Endothelial cell of umbilical vein (primary cell): ENCODE measurements at regions of chr19 and their contacts with region 1.

Region 1: DNA sequence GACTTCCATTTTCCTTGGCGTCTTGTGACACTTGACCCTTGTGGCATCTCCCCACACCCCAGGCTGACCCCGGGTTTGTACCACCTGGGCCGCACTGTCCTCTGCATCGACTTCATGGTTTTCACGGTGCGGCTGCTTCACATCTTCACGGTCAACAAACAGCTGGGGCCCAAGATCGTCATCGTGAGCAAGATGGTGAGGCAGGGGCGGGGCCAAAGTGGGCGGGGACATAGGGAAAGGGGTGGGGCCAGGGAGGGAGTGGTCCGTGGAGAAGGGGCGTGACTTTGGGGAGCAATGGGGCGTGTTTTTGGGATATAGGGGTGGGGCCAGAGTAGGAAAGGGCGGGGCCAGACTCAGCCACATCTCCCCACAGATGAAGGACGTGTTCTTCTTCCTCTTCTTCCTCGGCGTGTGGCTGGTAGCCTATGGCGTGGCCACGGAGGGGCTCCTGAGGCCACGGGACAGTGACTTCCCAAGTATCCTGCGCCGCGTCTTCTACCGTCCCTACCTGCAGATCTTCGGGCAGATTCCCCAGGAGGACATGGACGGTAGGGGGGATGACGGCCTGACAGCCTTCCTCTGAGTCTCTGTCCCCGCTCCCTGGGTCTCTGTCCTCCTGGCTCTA is 42.8 kb downstream of the TRPM4 start:
- DNase-seq: no peak
- H3K4me3 ChIP-seq: no peak overlapping the region
- H3K27ac ChIP-seq: no peak overlapping the region
- H3K4me1 ChIP-seq: peaks cover 9% of the 10 kb centered on the region
- H3K27me3 ChIP-seq: no peaks in the 10 kb centered on the region
- CTCF ChIP-seq: no peak
- POLR2A ChIP-seq: no peak

Region 2: DNA sequence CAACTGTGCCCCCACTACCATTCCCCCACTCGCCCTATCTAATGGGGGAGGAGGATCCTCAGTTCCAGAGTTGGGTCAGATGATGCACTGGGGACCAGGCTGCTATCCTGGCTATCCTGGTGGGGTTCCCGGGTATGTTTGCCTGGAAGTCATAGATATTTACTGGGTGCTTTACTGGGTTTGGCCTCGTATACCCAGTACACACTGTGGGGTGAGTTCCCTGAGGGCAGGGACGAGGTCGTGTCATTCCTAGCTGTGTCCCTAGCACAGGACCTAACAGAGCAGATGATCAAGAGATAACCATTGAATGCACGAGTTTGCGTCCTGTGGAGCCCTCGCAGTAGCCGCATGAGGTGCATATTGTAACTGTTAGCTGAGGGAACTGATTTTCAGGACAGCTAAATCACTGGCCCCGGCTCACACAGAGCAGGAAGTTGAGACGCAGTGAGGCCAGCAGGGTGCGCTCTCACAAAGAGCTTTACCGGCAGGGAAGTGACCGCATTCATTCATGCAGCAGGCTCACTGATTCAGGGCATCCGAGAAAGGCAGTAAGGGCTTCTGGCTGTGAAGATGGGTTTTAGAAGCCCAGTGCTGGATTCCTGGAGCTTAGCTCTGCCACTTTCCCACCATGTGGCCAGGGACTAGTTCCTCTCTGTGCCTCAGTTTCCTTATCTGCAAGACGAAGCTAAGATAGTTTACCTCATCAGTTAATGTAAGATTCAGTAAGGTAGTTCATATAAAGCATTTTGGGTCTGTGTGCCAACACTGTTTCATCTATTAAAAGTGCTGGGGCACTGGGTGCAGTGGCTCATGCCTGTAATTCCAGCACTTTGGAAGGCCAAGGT is 200.6 kb before region 1 on chr19:
- CTCF ChIA-PET with region 1: interaction called, 26 read pairs
- POLR2A ChIA-PET with region 1: no interaction called
- dilution Hi-C with region 1: no loop called
- intact Hi-C with region 1: no loop called
- DNase-seq: peak; percentile 64
- H3K4me3 ChIP-seq: no peak overlapping the region
- H3K27ac ChIP-seq: no peak overlapping the region
- H3K4me1 ChIP-seq: peaks cover under 1% of the 10 kb centered on the region
- H3K27me3 ChIP-seq: no peaks in the 10 kb centered on the region
- CTCF ChIP-seq: peak; percentile 75 to 85
- POLR2A ChIP-seq: no peak

Region 3: GRCh38 chr19:49106648-49107135 is 93.7 kb before region 1 on chr19:
- CTCF ChIA-PET with region 1: interaction called, 35 read pairs
- POLR2A ChIA-PET with region 1: no interaction called
- dilution Hi-C with region 1: no loop called
- intact Hi-C with region 1: no loop called
- DNase-seq: peak; percentile 45
- H3K4me3 ChIP-seq: no peak overlapping the region
- H3K27ac ChIP-seq: no peak overlapping the region
- H3K4me1 ChIP-seq: no peaks in the 10 kb centered on the region
- H3K27me3 ChIP-seq: no peaks in the 10 kb centered on the region
- CTCF ChIP-seq: peak; percentile 82 to 84
- POLR2A ChIP-seq: no peak

Region 4: GRCh38 chr19:49133621-49134454 is 66.5 kb before region 1 on chr19:
- CTCF ChIA-PET with region 1: interaction called, 35 read pairs
- POLR2A ChIA-PET with region 1: interaction called, 3 read pairs
- dilution Hi-C with region 1: no loop called
- intact Hi-C with region 1: no loop called
- DNase-seq: peak; percentile 54
- H3K4me3 ChIP-seq: peak overlapping the region in 1 of 3 experiments; percentile 30
- H3K27ac ChIP-seq: no peak overlapping the region
- H3K4me1 ChIP-seq: no peaks in the 10 kb centered on the region
- H3K27me3 ChIP-seq: peaks cover 0 to 7% of the 10 kb centered on the region in 2 experiments
- CTCF ChIP-seq: peak in 1 of 2 donors; percentile 6
- POLR2A ChIP-seq: no peak

Region 5: GRCh38 chr19:49157445-49158224 is 42.7 kb before region 1 on chr19 and contains the start of gene TRPM4:
- CTCF ChIA-PET with region 1: interaction called, 33 read pairs
- POLR2A ChIA-PET with region 1: no interaction called
- dilution Hi-C with region 1: no loop called
- intact Hi-C with region 1: no loop called
- DNase-seq: peak; percentile 73
- H3K4me3 ChIP-seq: peak within 1 kb of the TSS; percentile 79 to 89 (median 88)
- H3K27ac ChIP-seq: peak within 1 kb of the TSS; percentile 8
- H3K4me1 ChIP-seq: peaks cover 8% of the 10 kb centered on the region
- H3K27me3 ChIP-seq: peaks cover 0 to 2% of the 10 kb centered on the region in 2 experiments
- CTCF ChIP-seq: no peak
- POLR2A ChIP-seq: peak; percentile 77
- total RNA-seq, gene TRPM4: 38.9 and 40.6 TPM in 2 replicates

Region 6: DNA sequence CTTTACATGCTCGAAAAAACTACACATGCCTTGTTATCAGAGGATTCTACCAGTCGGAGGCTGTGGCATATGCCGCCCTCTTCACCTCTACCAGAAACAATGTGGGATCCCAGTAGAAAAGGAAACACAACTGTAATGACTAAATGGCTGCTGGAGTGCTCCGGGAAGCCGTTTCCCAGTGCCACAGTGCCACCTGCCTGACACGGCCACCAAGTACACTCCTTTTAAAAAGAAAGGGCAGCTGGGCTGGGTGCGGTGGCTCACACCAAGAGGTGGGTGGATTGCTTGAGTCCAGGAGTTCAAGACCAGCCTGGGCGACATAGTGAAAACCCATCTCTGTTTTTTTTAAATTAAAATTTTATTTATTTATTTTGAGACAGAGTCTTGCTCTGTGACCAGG is 24.5 kb after region 1 on chr19:
- CTCF ChIA-PET with region 1: interaction called, 10 read pairs
- POLR2A ChIA-PET with region 1: no interaction called
- dilution Hi-C with region 1: no loop called
- intact Hi-C with region 1: no loop called
- DNase-seq: peak; percentile 80
- H3K4me3 ChIP-seq: no peak overlapping the region
- H3K27ac ChIP-seq: no peak overlapping the region
- H3K4me1 ChIP-seq: no peaks in the 10 kb centered on the region
- H3K27me3 ChIP-seq: no peaks in the 10 kb centered on the region
- CTCF ChIP-seq: peak; percentile 51 to 66
- POLR2A ChIP-seq: no peak

Region 7: GRCh38 chr19:49347846-49348245 is 147.5 kb after region 1 on chr19:
- CTCF ChIA-PET with region 1: no interaction called
- POLR2A ChIA-PET with region 1: no interaction called
- dilution Hi-C with region 1: no loop called
- intact Hi-C with region 1: no loop called
- DNase-seq: peak; percentile 43
- H3K4me3 ChIP-seq: no peak overlapping the region
- H3K27ac ChIP-seq: no peak overlapping the region
- H3K4me1 ChIP-seq: no peaks in the 10 kb centered on the region
- H3K27me3 ChIP-seq: no peaks in the 10 kb centered on the region
- CTCF ChIP-seq: no peak
- POLR2A ChIP-seq: no peak

Region 8: DNA sequence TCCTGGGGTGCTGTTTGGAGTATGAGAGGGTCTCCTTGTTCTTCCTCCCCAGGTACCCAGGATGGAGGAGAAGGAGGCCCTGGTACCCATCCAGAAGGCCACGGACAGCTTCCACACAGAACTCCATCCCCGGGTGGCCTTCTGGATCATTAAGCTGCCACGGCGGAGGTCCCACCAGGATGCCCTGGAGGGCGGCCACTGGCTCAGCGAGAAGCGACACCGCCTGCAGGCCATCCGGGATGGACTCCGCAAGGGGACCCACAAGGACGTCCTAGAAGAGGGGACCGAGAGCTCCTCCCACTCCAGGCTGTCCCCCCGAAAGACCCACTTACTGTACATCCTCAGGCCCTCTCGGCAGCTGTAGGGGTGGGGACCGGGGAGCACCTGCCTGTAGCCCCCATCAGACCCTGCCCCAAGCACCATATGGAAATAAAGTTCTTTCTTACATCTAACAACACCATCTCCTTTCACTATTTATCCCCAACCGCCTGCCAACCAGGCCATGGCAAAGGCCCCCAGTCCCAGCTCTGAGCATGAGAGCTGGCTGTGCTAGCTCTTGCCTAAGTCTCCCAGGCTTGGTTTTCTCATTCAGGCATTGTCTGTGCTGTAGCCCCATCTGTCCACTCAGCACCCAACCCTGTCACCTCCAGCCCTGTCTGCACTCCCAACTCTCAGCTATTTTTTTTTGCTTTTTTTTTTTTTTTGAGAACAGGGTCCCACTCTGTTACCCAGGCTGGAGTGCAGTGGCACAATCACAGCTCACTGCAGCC is 174.5 kb after region 1 on chr19:
- CTCF ChIA-PET with region 1: no interaction called
- POLR2A ChIA-PET with region 1: no interaction called
- dilution Hi-C with region 1: no loop called
- intact Hi-C with region 1: no loop called
- DNase-seq: no peak
- H3K4me3 ChIP-seq: no peak overlapping the region
- H3K27ac ChIP-seq: no peak overlapping the region
- H3K4me1 ChIP-seq: no peaks in the 10 kb centered on the region
- H3K27me3 ChIP-seq: peaks cover 1 to 3% of the 10 kb centered on the region in 2 experiments
- CTCF ChIP-seq: no peak
- POLR2A ChIP-seq: no peak

Region 9: DNA sequence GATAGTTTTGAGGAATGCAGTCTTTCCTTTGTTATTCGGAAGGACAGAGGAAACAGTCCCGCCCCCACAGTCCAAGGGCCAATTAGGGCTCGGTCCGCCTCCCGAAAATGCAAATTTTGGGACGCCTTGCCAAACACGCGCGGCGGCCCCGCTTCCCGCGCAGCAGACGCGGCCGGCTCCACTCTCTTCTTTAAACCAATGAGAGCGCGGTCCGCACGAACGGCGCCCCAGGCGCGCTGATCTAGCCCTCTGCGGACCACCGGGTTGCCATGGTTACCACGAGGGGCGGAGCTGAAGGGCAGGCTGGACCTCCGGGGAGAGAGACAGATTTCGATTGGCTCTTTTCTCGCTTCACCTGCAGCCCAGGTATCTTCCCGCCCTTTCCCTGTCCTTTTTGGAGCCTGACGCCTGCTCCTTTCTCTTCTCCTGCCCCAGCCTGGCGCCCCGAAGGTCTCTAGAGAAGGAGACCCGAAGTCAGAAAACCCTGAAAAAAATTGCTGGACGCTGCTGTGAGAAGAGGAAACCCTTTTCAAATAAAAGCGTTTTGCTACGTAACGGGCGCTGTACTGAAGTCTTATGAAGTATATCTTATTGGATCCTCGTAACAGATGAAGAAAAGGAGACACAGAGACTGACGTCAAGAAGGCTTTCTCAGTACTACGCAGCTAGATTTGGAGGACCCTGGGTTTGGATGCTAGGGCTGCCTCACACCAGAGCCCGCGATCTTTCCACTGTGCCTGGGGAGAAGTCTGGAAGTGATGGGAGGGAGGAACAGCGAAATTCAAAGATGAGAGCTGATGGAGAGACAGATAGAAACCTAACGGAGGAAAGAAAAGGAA is 220.9 kb after region 1 on chr19:
- CTCF ChIA-PET with region 1: no interaction called
- POLR2A ChIA-PET with region 1: no interaction called
- dilution Hi-C with region 1: no loop called
- intact Hi-C with region 1: no loop called
- DNase-seq: peak; percentile 50
- H3K4me3 ChIP-seq: no peak overlapping the region
- H3K27ac ChIP-seq: no peak overlapping the region
- H3K4me1 ChIP-seq: no peaks in the 10 kb centered on the region
- H3K27me3 ChIP-seq: peaks cover 60 to 81% of the 10 kb centered on the region in 2 experiments
- CTCF ChIP-seq: no peak
- POLR2A ChIP-seq: no peak